PC-3 (cell line): ENCODE measurements at regions of chrX and their contacts with region 1.

Region 1: GRCh38 chrX:10636337-10636736 is 16.0 kb upstream of the MID1 start:
- DNase-seq: peak; percentile 80
- ATAC-seq: peak; percentile 25
- H3K4me3 ChIP-seq: peak overlapping the region; percentile 51; the same call in 1 of the 2 replicates
- H3K27ac ChIP-seq: peak overlapping the region; percentile 97; the same call in 1 of the 2 replicates
- H3K4me1 ChIP-seq: peaks cover 44% of the 10 kb centered on the region
- H3K27me3 ChIP-seq: no peaks in the 10 kb centered on the region
- CTCF ChIP-seq: peak; percentile 82

Region 2: DNA sequence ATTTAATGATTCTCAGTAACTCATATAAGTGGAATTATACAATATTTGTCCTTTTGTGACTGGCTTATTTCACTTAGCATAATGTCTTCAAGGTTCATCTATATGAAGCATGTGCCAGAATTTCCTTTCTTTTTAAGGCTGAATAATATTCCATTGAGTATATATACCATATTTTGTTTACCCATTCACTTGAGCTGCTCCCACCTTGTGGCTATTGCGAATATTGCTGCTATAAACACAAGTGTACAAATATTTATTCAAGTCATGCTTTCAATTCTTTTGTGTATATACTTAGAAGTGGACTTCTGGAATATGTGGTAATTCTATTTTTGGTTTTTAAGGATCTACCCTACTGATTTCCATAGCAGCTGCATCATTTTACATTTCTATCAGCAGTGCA is 235.1 kb before region 1 on chrX:
- CTCF ChIA-PET with region 1: no interaction called
- POLR2A ChIA-PET with region 1: no interaction called
- intact Hi-C with region 1: loop called (anchors 1 kb)
- DNase-seq: peak; percentile 57
- ATAC-seq: peak; percentile 35; the same call in 1 of the 2 replicates
- H3K4me3 ChIP-seq: no peak overlapping the region
- H3K27ac ChIP-seq: no peak overlapping the region
- H3K4me1 ChIP-seq: no peaks in the 10 kb centered on the region
- H3K27me3 ChIP-seq: no peaks in the 10 kb centered on the region
- CTCF ChIP-seq: peak; percentile 57

Region 3: DNA sequence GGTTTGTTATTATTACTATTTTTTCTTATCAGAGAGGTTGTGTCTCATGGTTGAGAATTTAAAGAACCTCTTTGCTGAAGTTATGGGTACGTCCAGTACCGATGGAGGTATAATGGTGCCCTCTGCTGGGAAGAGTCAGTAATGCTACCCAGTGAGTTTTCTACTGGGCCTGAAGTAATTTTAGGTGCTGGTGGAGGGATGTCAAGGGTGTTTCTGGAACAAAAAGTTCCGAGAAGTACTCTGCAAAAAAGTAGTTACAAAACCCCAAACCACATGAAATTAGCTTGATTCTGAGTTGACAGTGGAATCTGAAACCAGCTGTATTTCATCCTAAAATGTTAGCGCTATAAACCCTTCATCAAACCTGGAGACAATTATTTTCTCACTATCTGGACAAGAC is 86.5 kb after region 1 on chrX:
- CTCF ChIA-PET with region 1: no interaction called
- POLR2A ChIA-PET with region 1: no interaction called
- intact Hi-C with region 1: loop called (anchors 5 kb)
- DNase-seq: peak; percentile 78
- ATAC-seq: peak; percentile 64
- H3K4me3 ChIP-seq: no peak overlapping the region
- H3K27ac ChIP-seq: no peak overlapping the region
- H3K4me1 ChIP-seq: no peaks in the 10 kb centered on the region
- H3K27me3 ChIP-seq: no peaks in the 10 kb centered on the region
- CTCF ChIP-seq: peak; percentile 78